Aorta (tissue), 5 donors: ENCODE measurements at regions of chr3 and their contacts with region 1.

Region 1: GRCh38 chr3:128432971-128433704 is 33.6 kb downstream of the DNAJB8 start:
- DNase-seq: no peak
- ATAC-seq: no peak
- H3K4me3 ChIP-seq: no peak overlapping the region
- H3K27ac ChIP-seq: no peak overlapping the region
- H3K4me1 ChIP-seq: no peaks in the 10 kb centered on the region
- H3K27me3 ChIP-seq: no peaks in the 10 kb centered on the region

Region 2: GRCh38 chr3:128487813-128488635 is 54.9 kb after region 1 on chr3:
- intact Hi-C with region 1: loop called in 1 of 2 experiments (anchors 5 kb)
- DNase-seq: peak; percentile 81 to 94
- ATAC-seq: peak; percentile 75
- H3K4me3 ChIP-seq: peak overlapping the region; percentile 24 to 62
- H3K27ac ChIP-seq: no peak overlapping the region
- H3K4me1 ChIP-seq: no peaks in the 10 kb centered on the region
- H3K27me3 ChIP-seq: no peaks in the 10 kb centered on the region

Region 3: DNA sequence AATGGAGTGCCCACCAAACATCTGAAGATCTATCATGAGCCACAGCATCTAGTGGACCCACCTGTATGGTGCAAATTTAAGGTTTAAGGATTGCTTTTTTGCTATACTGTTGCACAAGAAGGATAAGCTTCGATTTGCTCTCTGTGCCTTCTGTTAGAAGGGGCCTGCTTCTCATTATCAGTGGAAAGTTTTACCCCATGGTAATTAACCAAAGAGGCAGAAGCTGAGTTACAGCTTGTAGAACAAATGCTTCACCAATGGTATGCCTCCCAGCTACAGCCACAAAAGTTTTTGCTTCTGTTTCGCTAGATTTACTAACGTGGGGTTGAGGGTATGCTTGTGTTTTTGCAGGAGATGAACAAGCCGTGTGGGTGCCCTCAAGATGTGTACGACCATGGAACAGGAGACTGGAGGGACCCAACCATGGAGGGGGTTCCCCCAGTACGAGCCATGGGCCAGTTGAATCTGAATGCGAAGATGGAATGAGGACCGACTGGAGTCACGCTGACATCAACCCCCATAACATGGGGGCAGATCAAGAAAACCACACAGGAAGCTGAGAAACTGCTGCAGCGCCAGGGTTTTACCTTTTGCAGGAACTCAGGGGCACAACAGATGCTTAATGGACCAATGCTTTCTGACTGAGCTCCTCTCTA is 489.8 kb after region 1 on chr3:
- intact Hi-C with region 1: no loop called
- DNase-seq: peak in 1 of 2 donors; percentile 15
- ATAC-seq: no peak
- H3K4me3 ChIP-seq: no peak overlapping the region
- H3K27ac ChIP-seq: no peak overlapping the region
- H3K4me1 ChIP-seq: no peaks in the 10 kb centered on the region
- H3K27me3 ChIP-seq: no peaks in the 10 kb centered on the region